Activated T-helper 1 cell treated with anti-CD3 and anti-CD28 coated beads, Interleukin-12 subunit alpha, Interleukin-12 subunit beta, Interleukin-2, Interleukin-4 antibody, amounts not matched to agents 30 ng/mL and 10 ng/mL and 1 ng/mL, durations not matched to agents 14 hours and 24 hours and 36 hours (primary cell): ENCODE measurements at regions of chr7 and their contacts with region 1.

Region 1: GRCh38 chr7:114269714-114270113 is 144.9 kb upstream of the FOXP2 start:
- DNase-seq: no peak
- H3K4me3 Mint-ChIP-seq: no peak overlapping the region
- H3K27ac Mint-ChIP-seq: no peak overlapping the region
- H3K4me1 Mint-ChIP-seq: no peaks in the 10 kb centered on the region
- H3K27me3 Mint-ChIP-seq: no peaks in the 10 kb centered on the region

Region 2: DNA sequence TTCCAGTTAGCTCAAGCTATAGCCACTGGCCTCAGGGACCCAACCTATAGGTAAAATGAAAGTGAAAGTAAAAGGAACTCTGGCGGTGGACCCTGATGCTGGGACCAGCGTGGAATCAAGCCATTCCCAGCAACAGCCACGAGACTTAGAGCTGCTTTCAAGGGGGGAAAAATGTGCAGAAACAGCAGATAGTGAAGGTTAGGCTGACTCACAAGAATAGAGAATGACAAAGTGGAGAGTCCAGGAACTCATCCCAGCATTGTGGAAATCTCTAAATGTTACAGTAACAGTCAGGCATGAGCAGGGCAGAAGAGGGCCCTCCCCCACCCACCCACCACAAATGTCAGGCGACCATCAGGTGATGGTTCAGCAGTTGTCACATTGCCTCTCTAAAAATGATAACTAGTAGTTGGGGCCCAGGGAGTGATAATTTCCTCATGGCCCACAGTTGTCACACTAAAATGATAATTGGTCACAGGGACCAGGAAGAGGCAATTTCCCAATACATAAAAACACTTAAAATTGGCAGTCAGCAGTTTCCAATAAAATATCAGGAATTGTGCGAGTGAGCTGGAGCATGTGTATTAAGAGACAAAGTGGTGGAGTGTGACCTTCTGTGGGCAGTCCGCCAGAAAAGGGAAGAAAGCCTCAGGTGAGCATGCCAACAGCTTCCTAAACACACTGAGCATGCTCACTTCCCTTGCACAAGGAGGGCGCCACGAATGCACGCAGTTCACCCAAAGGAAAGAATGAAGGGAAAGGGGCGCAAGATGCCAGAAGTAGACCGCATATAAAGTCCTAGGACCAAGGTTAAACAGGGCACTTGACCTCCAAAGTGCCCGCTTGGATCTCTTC is 221.1 kb before region 1 on chr7:
- intact Hi-C with region 1: loop called (anchors 2 kb)
- DNase-seq: no peak
- H3K4me3 Mint-ChIP-seq: peak overlapping the region; percentile 27
- H3K27ac Mint-ChIP-seq: no peak overlapping the region
- H3K4me1 Mint-ChIP-seq: peaks cover 7% of the 10 kb centered on the region
- H3K27me3 Mint-ChIP-seq: no peaks in the 10 kb centered on the region

Region 3: DNA sequence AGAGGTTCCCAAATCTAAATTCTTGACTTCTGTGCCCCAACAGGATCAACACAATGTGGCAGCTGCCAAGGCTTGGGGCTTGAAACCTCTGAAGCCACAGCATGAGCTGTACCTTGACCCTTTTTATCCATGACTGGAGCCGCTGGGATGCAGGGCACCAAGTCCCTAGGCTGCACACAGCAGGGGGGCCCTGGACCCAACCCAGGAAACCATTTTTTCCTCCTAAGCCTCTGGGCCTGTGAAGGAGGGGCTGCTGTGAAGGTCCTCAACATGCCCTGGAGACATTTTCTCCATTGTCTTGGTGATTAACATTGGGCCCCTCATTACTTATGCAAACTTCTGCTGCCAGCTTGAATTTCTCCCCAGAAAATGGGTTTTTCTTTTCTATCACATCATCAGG is 217.5 kb after region 1 on chr7:
- intact Hi-C with region 1: no loop called
- DNase-seq: no peak
- H3K4me3 Mint-ChIP-seq: no peak overlapping the region
- H3K27ac Mint-ChIP-seq: no peak overlapping the region
- H3K4me1 Mint-ChIP-seq: no peaks in the 10 kb centered on the region
- H3K27me3 Mint-ChIP-seq: no peaks in the 10 kb centered on the region

Region 4: DNA sequence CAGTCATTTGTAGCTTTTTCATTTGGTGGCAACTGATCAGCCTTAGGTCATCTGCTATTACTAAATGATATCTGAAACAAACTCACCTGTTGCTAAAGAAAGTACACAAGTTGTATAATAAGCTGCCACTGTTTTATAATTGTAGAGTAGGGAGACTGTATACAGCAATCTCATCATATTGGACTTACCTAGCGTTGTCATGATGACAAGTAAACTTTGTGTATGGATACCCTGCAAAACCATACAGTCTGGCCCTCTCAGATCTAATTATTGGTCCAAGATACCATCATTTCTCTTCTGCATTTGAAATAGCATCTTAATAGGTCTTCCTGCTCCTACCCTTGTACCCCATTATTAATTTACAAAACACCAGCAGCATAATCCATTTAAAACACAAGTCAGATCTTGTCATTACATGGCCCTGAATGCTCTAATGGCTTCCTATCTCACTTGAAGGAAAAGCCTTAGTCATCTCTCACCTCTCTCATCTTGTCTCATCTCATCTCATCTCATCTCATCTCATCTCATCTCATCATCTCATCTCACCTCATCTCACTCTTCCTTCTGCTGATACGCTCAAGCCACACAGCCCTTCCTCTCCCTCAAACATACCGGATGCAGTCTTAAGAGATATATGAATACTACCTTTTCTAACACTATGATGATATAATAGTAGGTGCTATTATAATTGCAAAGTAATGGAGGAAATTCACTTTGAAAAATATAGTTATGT is 1192.8 kb after region 1 on chr7:
- intact Hi-C with region 1: loop called (anchors 10 kb)
- DNase-seq: no peak
- H3K4me3 Mint-ChIP-seq: no peak overlapping the region
- H3K27ac Mint-ChIP-seq: no peak overlapping the region
- H3K4me1 Mint-ChIP-seq: no peaks in the 10 kb centered on the region
- H3K27me3 Mint-ChIP-seq: no peaks in the 10 kb centered on the region